OCI-LY7 (cell line): ENCODE measurements at regions of chr1 and their contacts with region 1.

Region 1: GRCh38 chr1:60436186-60436585 is 362.6 kb upstream of the C1orf87 start:
- DNase-seq: no peak
- H3K4me3 ChIP-seq: no peak overlapping the region
- H3K27ac ChIP-seq: no peak overlapping the region
- H3K4me1 ChIP-seq: no peaks in the 10 kb centered on the region
- CTCF ChIP-seq: no peak

Region 2: GRCh38 chr1:60311838-60312237 is 124.3 kb before region 1 on chr1:
- CTCF ChIA-PET with region 1: no interaction called
- POLR2A ChIA-PET with region 1: no interaction called
- intact Hi-C with region 1: no loop called
- DNase-seq: no peak
- H3K4me3 ChIP-seq: no peak overlapping the region
- H3K27ac ChIP-seq: no peak overlapping the region
- H3K4me1 ChIP-seq: no peaks in the 10 kb centered on the region
- CTCF ChIP-seq: no peak

Region 3: DNA sequence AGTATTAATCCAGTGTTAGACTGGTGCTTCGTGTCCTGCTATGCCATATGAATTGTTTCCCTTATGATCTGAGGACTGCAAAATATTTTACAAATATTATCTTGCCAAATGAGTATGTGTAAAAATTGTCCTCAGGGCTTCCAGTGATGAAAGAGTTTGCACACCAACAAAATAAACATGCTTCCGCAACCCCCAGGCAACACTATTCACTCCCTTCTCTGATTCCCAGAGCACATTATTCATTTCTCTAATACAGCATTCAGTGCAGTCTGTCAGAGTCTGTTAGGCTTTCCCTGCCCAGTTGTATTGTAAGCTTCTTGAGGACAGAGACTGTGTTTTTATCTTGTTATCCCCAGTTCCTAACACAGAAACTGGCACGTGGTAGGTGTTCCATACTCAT is 47.3 kb after region 1 on chr1:
- CTCF ChIA-PET with region 1: no interaction called
- POLR2A ChIA-PET with region 1: interaction called, 10 read pairs
- intact Hi-C with region 1: no loop called
- DNase-seq: no peak
- H3K4me3 ChIP-seq: no peak overlapping the region
- H3K27ac ChIP-seq: no peak overlapping the region
- H3K4me1 ChIP-seq: no peaks in the 10 kb centered on the region
- CTCF ChIP-seq: no peak